ENCODE measurements at regions of chr2 and their contacts with region 1.

Region 1: DNA sequence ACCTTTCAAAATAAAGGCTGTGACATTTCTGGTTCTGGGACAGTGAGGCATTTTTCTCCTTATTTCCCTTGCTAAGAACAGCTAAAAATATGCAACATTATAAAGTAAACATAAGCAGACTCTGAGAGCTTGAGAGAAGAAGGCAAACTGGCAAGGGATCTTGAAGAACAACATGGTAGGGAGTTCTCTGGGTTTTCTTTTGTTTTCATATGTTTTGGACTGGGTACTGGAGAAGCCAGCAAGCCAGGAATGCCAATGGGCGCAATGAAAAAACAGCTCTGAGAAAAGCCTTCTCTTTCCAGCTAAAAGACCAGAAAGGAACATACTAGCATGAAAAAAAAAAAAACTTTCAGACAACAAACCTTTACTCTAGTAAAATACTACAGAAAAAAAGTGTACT is 351.4 kb upstream of the HS6ST1 start:
- DNase-seq: no peak
- ATAC-seq: no peak

Region 2: GRCh38 chr2:128686497-128686859 is 16.4 kb after region 1 on chr2:
- intact Hi-C with region 1: loop called (anchors 1 kb)
- DNase-seq: peak; percentile 32
- ATAC-seq: no peak

Measured in sciatic nerve (tissue), 2 donors.